Left lung (tissue), 14 donors: ENCODE measurements at regions of chr2 and their contacts with region 1.

Region 1: GRCh38 chr2:64562148-64562784 is 38.1 kb downstream of the AFTPH start:
- DNase-seq: peak in 1 of 4 donors; percentile 16
- ATAC-seq: peak; percentile 71
- H3K4me3 ChIP-seq: no peak overlapping the region
- H3K27ac ChIP-seq: no peak overlapping the region
- H3K4me1 ChIP-seq: peaks cover 0 to 17% of the 10 kb centered on the region in 2 donors
- H3K27me3 ChIP-seq: no peaks in the 10 kb centered on the region
- CTCF ChIP-seq: peak in 1 of 2 donors; percentile 16

Region 2: DNA sequence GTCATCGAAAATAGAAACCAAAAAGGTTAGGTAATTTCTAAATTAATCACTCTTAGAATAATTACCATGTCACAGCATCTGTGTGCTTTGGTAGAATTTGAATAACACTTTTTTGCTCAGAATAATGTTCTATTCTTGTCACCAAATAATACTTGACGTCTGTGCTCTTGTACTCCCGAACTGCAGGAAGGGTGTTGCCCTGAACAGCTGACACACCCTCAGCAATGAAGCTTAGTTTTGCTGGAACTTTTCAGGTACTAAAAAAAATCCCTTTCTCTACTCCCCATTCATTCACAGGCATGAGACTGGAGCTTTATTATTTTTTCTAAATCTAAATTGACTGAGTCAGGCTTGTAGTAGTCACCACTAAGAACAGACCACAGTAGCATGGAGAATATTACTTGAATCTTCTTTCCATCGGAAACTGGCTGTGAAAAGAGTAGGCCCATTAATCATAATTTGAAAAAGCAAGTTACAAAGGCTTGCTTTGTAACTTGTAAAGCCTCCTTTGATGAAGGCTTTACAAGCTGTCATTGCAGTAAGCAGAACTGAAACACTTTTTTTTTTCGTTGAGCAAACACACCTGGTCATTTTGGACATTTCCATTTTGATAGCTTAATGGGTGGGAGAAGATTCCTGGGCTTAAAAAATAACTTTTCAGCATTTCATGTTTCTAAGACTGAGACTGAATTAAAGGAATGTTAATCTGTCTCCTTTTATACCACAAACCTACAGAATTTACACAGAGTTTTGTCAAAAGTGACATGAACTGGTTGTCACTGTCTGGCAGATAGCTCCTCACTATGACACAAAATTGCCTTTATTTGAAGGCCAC is 347.8 kb before region 1 on chr2:
- intact Hi-C with region 1: no loop called
- DNase-seq: peak in 1 of 4 donors; percentile 46
- ATAC-seq: peak; percentile 69
- H3K4me3 ChIP-seq: no peak overlapping the region
- H3K27ac ChIP-seq: peak overlapping the region; percentile 78 to 90
- H3K4me1 ChIP-seq: peaks cover 20 to 55% of the 10 kb centered on the region in 2 donors
- H3K27me3 ChIP-seq: no peaks in the 10 kb centered on the region
- CTCF ChIP-seq: no peak

Region 3: DNA sequence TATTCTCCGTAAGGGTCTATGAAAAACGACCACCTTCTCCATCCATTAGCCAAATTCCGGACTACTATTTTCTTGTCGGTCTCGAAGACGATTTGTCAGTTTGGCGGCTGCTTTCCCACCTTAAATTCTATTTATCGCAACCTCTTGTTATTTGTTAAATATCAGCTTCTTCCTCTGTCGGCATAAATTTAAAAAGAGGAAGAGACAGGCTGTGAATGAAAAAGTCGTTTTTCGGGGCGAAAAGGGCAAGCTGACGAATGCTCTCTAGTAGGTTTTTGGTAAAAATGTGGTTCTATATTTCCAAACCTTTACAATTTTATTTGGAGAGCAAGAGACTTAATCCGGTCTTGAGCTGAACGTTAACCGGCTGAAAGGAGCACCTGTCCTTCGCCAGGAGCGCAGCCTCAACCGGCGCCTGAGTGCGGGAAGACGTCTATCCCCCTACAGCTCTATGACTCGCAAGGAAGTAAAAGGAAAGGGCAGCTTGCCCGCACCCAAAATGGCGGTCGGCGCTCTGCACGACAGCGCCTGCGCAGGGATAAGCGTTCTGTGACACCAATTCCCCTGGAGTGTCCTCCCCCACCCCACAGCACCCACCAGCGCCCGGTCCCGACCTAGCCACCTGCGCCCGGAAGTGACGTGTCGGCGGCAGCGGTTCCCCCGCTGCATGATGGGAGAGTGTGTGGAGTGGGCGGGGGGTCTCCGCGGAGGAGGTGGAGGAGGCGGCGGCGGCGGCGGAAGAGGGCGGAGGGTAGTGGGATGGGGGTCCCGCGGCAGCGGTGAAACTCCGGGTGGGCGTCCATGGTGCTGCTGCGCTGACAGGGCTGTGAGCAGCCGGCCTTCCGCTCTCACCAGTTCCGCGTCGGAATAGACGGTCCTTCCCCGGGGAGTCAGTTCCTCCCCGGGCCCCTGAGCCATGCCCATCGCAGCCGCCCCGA is 38.3 kb before region 1 on chr2 and contains the start of gene AFTPH:
- intact Hi-C with region 1: loop called in 1 of 2 experiments (anchors 5 kb)
- DNase-seq: peak; percentile 98 to 100 (median 100)
- ATAC-seq: peak; percentile 98
- H3K4me3 ChIP-seq: peak within 1 kb of the TSS; percentile 97 to 99
- H3K27ac ChIP-seq: peak within 1 kb of the TSS; percentile 95 to 99
- H3K4me1 ChIP-seq: peaks cover 0 to 38% of the 10 kb centered on the region in 2 donors
- H3K27me3 ChIP-seq: no peaks in the 10 kb centered on the region
- CTCF ChIP-seq: no peak
- polyA plus RNA-seq, gene AFTPH: 50.2 to 66.4 (median 55.3) TPM

Region 4: DNA sequence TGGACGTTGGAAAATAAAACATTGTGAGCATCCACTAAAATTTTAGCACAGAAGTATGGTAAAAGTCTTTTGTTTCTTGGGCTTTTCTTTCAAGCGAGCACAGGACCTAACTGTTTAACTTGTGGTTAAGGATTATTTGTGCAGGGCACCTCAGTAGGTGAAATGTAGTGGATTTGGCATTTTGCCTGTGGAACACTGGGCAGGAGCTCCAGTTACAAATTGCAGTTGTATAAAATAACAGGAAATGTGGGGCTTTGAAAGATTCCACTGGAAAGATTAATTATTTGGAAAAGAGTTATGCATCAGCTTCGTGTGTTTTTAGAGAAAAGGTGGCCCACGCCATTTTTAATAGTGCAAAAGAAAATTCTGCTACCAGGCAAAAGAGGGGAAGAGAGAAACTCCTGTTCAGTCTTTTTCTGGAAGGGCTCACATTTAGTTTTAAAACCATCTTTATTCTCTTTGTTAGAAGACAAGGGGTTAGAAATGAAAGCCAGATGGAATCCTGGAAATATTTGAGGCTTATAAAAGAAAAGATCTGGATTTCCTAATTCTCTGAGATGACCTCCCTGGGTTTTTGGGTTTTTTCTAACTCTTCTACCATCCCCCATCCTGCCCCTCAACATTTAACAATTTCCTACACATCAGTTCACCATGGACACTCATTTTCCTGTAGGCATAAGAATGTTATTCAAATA is 235.8 kb after region 1 on chr2:
- intact Hi-C with region 1: no loop called
- DNase-seq: peak in 1 of 4 donors; percentile 75
- ATAC-seq: peak; percentile 85
- H3K4me3 ChIP-seq: no peak overlapping the region
- H3K27ac ChIP-seq: no peak overlapping the region
- H3K4me1 ChIP-seq: peaks cover 5 to 12% of the 10 kb centered on the region in 2 donors
- H3K27me3 ChIP-seq: no peaks in the 10 kb centered on the region
- CTCF ChIP-seq: no peak